ENCODE measurements at regions of chr2 and their contacts with region 1.

Region 1: GRCh38 chr2:162221064-162221463 is 22.2 kb downstream of the FAP start:
- DNase-seq: peak; percentile 59 to 84 (median 67)
- H3K4me3 ChIP-seq: no peak overlapping the region
- H3K27ac ChIP-seq: no peak overlapping the region
- H3K4me1 ChIP-seq: no peaks in the 10 kb centered on the region
- H3K27me3 ChIP-seq: no peaks in the 10 kb centered on the region
- CTCF ChIP-seq: peak; percentile 71 to 87 (median 80)
- POLR2A ChIP-seq: no peak

Region 2: DNA sequence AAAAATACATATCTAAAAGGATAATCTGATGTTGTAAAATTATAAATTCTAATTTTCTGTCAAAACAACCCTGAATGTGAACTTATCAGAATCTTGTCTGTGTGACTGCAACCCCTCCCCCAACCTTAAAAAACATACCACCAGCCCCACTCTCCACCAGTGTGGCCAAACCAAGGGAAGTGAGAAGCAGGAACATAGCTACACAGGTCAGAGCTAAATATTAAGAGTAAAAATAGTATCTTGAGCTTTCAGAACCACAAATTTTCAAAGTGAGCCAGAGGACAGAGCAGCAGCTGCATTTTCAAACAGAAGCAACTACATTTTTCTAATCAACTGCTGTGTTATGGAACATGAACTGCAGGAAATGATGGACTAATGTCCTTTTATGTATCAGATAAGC is 440.2 kb before region 1 on chr2:
- intact Hi-C with region 1: no loop called
- DNase-seq: no peak
- H3K4me3 ChIP-seq: no peak overlapping the region
- H3K27ac ChIP-seq: no peak overlapping the region
- H3K4me1 ChIP-seq: no peaks in the 10 kb centered on the region
- H3K27me3 ChIP-seq: no peaks in the 10 kb centered on the region
- CTCF ChIP-seq: no peak
- POLR2A ChIP-seq: no peak

Region 3: GRCh38 chr2:162297925-162298552 is 77.0 kb after region 1 on chr2:
- intact Hi-C with region 1: loop called (anchors 5 kb)
- DNase-seq: peak; percentile 44 to 88 (median 76)
- H3K4me3 ChIP-seq: no peak overlapping the region
- H3K27ac ChIP-seq: no peak overlapping the region
- H3K4me1 ChIP-seq: peaks cover 0 to 9% of the 10 kb centered on the region in 2 donors
- H3K27me3 ChIP-seq: no peaks in the 10 kb centered on the region
- CTCF ChIP-seq: peak; percentile 63 to 91 (median 77)
- POLR2A ChIP-seq: no peak

Measured in adrenal gland (tissue), 19 donors.